AG04449 (cell line): ENCODE measurements at regions of chr3 and their contacts with region 1.

Region 1: DNA sequence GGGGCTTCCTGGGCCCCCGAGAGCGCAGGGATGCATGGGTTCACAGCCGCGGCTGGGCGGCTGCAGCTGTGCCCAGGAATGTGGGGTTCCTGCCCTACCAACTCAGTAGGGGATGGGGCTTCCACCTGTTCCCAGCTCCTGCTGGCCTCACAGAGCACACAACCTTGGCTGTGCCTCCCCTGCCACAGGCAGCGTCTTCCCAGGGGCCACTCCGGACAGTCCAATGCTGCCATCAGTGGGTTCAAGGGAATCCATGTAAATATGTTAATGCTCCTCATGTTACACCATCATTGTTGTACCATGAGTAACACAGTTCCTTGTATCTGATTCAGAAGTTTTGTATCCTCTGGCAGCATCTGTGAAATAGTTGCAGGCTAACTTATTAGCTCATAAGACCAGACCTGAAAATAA is 12.1 kb upstream of the SIAH2 start:
- DNase-seq: peak; percentile 63
- H3K4me3 ChIP-seq: no peak overlapping the region
- CTCF ChIP-seq: no peak

Region 2: DNA sequence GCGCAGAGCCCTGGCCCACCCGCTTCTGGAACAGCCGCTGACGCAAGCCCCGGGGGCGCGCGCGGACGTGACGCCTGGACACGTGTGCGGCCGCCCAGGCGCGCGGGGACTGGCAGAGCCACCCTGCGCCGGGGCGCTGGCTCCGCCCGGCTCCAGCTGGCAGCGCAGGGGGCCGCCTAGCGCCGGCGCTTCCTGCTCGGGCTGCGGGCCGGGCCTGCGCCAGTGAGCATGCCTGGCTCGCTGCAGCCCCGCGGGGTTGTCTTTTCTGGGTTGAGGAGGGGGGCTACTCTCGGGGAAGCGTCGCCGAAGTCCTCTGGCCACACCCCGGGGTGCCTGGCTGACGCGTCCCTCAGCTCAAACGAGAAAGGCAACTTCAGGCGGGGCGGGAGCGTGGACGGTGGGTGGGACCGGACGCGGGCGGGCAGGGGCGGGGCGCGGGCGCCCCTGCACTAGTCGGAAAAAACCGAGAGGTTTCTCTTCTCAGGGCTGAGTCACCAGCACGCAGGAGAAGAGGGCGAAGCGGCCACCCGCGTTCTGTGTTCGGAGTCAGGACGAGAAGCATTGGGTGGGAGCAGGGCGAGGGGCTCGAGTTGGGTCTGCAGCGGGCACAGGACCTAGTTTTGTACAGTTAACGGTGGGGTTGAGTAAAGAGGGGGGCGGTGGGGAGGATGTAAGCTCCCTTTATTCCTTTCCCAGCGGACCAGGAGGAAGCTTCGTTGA is 11.8 kb before region 1 on chr3 and contains the start of gene SIAH2:
- CTCF ChIA-PET with region 1: interaction called, 20 read pairs
- POLR2A ChIA-PET with region 1: interaction called, 12 read pairs
- DNase-seq: peak; percentile 73
- H3K4me3 ChIP-seq: peak within 1 kb of the TSS; percentile 89
- CTCF ChIP-seq: no peak